CD4-positive, alpha-beta T cell (primary cell): ENCODE measurements at regions of chr1 and their contacts with region 1.

Region 1: DNA sequence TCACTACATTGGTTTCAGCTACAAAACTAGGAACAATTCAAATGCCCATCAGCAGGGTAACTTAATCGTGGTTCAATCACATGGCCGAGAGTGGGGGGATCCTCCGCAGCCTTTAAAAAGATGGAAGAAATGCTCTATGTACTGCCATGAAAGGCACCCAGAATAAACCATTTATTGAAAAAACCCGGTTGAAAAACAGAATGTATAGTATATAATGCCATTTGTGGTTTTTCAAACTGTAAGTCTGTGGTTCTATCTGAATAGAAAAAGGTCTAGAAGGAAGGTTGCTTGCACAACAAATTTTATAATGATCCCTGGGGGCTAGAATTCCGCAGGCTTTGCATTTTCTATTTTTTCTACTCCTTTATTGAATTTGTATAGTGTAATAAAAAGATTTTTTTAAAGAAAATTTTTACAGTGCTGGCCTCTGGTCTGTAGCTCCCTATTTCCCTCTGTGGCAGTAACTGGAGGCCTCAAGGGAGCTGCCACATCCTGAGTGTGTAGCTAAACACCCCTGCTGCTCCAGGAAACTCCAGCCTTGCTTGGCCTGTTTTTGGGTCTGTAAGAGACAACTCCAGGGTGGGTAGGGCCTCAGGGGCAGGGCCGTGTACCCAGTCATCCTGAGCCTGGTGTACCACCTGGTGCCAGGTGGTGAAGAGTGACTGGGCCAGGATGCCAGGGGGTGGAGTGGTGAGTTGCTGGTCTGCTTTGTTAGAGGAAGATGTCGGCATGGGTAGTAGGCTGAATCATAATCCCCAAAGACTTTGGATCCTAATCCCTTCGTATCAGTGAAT is 51.5 kb upstream of the EPS8L3 start:
- DNase-seq: no peak
- ATAC-seq: no peak
- H3K4me3 ChIP-seq: no peak overlapping the region
- H3K4me3 Mint-ChIP-seq: no peak overlapping the region
- H3K27ac ChIP-seq: no peak overlapping the region
- H3K27ac Mint-ChIP-seq: no peak overlapping the region
- H3K4me1 ChIP-seq: peaks cover 4% of the 10 kb centered on the region
- H3K4me1 Mint-ChIP-seq: no peaks in the 10 kb centered on the region
- H3K27me3 ChIP-seq: no peaks in the 10 kb centered on the region
- H3K27me3 Mint-ChIP-seq: no peaks in the 10 kb centered on the region
- CTCF ChIP-seq: no peak

Region 2: GRCh38 chr1:109739738-109740660 is 75.2 kb before region 1 on chr1:
- CTCF ChIA-PET with region 1: no interaction called
- POLR2A ChIA-PET with region 1: no interaction called
- intact Hi-C with region 1: no loop called
- DNase-seq: peak; percentile 73 to 94 (median 82)
- ATAC-seq: peak; percentile 94
- H3K4me3 ChIP-seq: peak overlapping the region; percentile 71
- H3K4me3 Mint-ChIP-seq: peak overlapping the region; percentile 90
- H3K27ac ChIP-seq: peak overlapping the region in 1 of 2 donors; percentile 14
- H3K27ac Mint-ChIP-seq: peak overlapping the region; percentile 80
- H3K4me1 ChIP-seq: peaks cover 18% of the 10 kb centered on the region
- H3K4me1 Mint-ChIP-seq: peaks cover 15% of the 10 kb centered on the region
- H3K27me3 ChIP-seq: peaks cover 0 to 4% of the 10 kb centered on the region in 2 experiments
- H3K27me3 Mint-ChIP-seq: no peaks in the 10 kb centered on the region
- CTCF ChIP-seq: no peak

Region 3: GRCh38 chr1:109751531-109752260 is 63.5 kb before region 1 on chr1:
- CTCF ChIA-PET with region 1: no interaction called
- POLR2A ChIA-PET with region 1: no interaction called
- intact Hi-C with region 1: no loop called
- DNase-seq: no peak
- ATAC-seq: no peak
- H3K4me3 ChIP-seq: no peak overlapping the region
- H3K4me3 Mint-ChIP-seq: no peak overlapping the region
- H3K27ac ChIP-seq: no peak overlapping the region
- H3K27ac Mint-ChIP-seq: no peak overlapping the region
- H3K4me1 ChIP-seq: no peaks in the 10 kb centered on the region
- H3K4me1 Mint-ChIP-seq: no peaks in the 10 kb centered on the region
- H3K27me3 ChIP-seq: peaks cover 5 to 10% of the 10 kb centered on the region in 2 experiments
- H3K27me3 Mint-ChIP-seq: peaks cover 10% of the 10 kb centered on the region
- CTCF ChIP-seq: no peak

Region 4: GRCh38 chr1:109886827-109887226 is 71.6 kb after region 1 on chr1:
- CTCF ChIA-PET with region 1: no interaction called
- POLR2A ChIA-PET with region 1: no interaction called
- intact Hi-C with region 1: loop called in 1 of 2 experiments (anchors 5 kb)
- DNase-seq: peak in 1 of 14 experiments; percentile 35
- ATAC-seq: no peak
- H3K4me3 ChIP-seq: no peak overlapping the region
- H3K4me3 Mint-ChIP-seq: no peak overlapping the region
- H3K27ac ChIP-seq: no peak overlapping the region
- H3K27ac Mint-ChIP-seq: no peak overlapping the region
- H3K4me1 ChIP-seq: peaks cover 6% of the 10 kb centered on the region
- H3K4me1 Mint-ChIP-seq: no peaks in the 10 kb centered on the region
- H3K27me3 ChIP-seq: no peaks in the 10 kb centered on the region
- H3K27me3 Mint-ChIP-seq: no peaks in the 10 kb centered on the region
- CTCF ChIP-seq: no peak